Dorsolateral prefrontal cortex (tissue), 120 donors: ENCODE measurements at regions of chr9 and their contacts with region 1.

Region 1: DNA sequence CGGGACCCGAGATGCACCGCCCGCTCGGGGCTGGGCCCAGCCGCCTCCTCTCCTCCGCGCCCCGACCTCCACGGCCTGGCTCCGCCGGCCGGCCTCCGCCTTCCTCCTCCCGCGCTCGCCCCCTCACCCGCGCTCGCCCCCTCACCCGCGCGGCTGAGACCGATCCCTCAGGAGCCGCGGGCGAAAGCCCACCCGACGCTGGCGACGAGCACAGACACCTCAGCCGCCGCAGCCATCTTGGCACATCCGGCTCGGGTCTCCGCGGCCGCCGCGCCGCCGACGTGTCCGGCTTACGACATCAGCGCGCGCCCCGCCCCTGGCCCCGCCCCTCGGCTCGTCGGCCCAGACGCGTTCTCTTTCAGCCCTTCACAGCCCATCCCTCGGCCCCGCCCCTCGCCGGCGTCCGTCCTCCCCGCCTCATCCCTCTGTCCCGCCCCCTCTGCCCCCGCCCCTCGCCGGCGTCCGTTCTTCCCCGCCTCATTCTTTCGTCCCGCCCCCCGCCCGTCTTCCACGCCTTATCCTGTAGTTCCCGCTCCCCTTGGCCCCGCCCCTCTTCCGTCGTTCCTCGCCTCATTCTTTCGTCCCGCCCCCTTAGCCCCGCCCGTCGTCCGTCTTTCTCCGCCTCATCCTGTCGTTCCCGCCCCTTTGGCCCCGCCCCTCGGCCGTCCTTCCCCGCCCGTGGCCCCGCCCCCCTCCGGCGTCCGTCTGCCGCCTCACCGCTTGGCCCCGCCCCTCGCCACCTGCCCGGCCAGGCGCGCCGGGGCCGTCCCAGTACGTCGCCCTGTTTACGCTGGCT is at the start of gene SEC16A:
- DNase-seq: peak; percentile 98 to 100 (median 99)
- H3K4me3 ChIP-seq: peak within 1 kb of the TSS; percentile 72 to 100 (median 92)
- H3K27ac ChIP-seq: peak within 1 kb of the TSS; percentile 91 to 100 (median 99)
- H3K27me3 ChIP-seq: no peaks in the 10 kb centered on the region
- CTCF ChIP-seq: peak in 15 of 56 donors; percentile 11 to 42 (median 22)
- total RNA-seq, gene SEC16A: 52.6 to 89.0 (median 68.2) TPM

Region 2: GRCh38 chr9:136410500-136411287 is 72.3 kb before region 1 on chr9 and contains the starts of genes ENTR1 and PMPCA:
- intact Hi-C with region 1: loop called (anchors 2 to 5 kb)
- DNase-seq: peak; percentile 88 to 96 (median 91)
- H3K4me3 ChIP-seq: peak within 1 kb of the TSS; percentile 77 to 100 (median 95)
- H3K27ac ChIP-seq: peak within 1 kb of the TSS in 56 of 59 donors; percentile 27 to 94 (median 79)
- H3K27me3 ChIP-seq: no peaks in the 10 kb centered on the region
- CTCF ChIP-seq: peak in 16 of 56 donors; percentile 5 to 42 (median 24)
- total RNA-seq, gene ENTR1: 22.3 to 62.1 (median 38.0) TPM
- total RNA-seq, gene PMPCA: 39.7 to 75.4 (median 53.0) TPM

Region 3: DNA sequence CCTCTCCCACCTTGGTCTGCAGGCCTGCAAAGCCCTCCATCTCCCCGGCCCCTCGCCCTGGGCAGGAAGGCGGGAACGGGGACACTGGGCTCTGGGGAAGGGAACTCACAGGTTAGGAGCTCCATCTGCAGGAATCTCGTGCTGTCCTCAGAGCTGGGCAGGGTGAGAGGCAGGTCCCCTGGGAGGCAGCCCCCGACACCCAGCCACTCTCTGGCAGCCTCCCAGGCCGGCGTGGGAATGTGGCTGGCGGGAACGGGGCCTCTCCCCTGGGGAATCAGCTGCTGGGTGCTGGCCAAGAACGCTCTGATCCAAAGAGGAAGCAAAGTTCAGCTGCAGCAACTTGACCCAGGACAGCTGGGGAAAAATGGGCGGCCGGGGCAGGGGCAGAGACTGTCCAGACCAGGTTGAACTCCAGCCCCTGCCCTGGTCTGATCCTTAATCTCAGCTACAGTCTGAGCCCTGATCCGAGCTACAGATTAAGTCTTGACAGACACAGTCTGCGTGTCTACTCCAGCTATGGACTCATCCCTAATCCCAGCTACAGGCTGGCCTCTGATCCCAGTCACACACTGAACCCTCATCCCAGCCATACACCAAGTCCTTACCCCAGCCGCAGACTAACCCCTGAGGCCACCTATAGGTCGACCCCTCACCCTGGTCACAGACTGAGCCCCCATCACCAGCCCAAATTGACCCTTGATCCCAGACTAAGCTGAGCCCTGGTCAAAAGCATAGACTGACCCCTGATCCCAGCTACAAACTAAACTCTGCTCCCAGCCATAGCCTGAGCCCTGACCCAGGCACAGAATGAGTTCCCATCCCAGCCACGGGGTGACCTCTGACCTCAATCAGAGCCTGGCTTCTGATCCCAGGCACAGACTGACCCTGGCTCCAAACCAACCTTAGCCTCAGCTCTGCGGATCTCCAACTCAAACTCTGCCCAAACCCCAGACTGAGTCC is 142.4 kb after region 1 on chr9:
- intact Hi-C with region 1: loop called (anchors 1 to 2 kb)
- DNase-seq: peak in 6 of 10 donors; percentile 33 to 74 (median 50)
- H3K4me3 ChIP-seq: peak overlapping the region in 1 of 59 donors; percentile 28
- H3K27ac ChIP-seq: peak overlapping the region in 19 of 59 donors; percentile 3 to 73 (median 31)
- H3K27me3 ChIP-seq: no peaks in the 10 kb centered on the region
- CTCF ChIP-seq: peak in 55 of 56 donors; percentile 29 to 84 (median 67)

Region 4: GRCh38 chr9:136631038-136632000 is 148.3 kb after region 1 on chr9:
- intact Hi-C with region 1: loop called (anchors 1 to 2 kb)
- DNase-seq: peak in 9 of 10 donors; percentile 47 to 81 (median 68)
- H3K4me3 ChIP-seq: no peak overlapping the region
- H3K27ac ChIP-seq: peak overlapping the region in 13 of 59 donors; percentile 6 to 65 (median 41)
- H3K27me3 ChIP-seq: no peaks in the 10 kb centered on the region
- CTCF ChIP-seq: peak; percentile 38 to 89 (median 77)

Region 5: GRCh38 chr9:136728080-136728547 is 245.1 kb after region 1 on chr9:
- intact Hi-C with region 1: loop called (anchors 2 to 10 kb)
- DNase-seq: peak; percentile 66 to 91 (median 85)
- H3K4me3 ChIP-seq: peak overlapping the region; percentile 63 to 100 (median 89)
- H3K27ac ChIP-seq: peak overlapping the region in 54 of 59 donors; percentile 1 to 93 (median 75)
- H3K27me3 ChIP-seq: no peaks in the 10 kb centered on the region
- CTCF ChIP-seq: peak; percentile 85 to 100 (median 96)